Right cardiac atrium (tissue), 5 donors: ENCODE measurements at regions of chr1 and their contacts with region 1.

Region 1: DNA sequence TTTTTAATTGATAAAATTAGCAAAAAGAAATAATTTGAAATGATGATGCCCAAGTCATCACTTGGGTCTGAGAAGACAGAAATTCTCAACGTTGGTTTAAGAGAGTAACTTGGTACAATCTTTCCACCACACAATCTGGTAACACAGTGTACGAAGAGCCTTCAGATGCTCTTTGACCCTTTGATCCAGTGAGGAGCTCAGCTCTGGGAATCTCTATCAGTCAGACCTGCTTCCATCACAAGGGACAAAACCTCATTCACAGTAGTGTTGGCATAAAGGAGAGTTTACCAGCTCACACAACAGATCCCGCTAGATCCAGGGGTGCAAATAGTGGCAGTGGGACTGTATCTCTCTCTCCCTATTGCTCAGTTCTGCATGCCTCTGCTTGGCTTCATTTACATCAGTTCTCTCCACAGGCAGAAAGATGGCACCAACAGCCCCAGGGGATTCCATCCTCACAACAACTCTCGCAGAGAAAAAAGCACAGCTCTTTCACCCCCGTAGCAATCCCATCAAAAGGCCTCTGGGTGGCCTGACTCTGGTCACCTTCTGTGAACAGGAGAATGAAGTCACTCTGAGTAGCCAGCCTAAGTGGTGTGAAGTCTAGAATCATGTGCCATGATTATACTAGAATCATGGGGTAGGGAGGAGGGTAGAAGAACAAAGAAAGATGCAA is 119.7 kb downstream of the ZNF281 start:
- DNase-seq: no peak
- ATAC-seq: no peak
- H3K4me3 ChIP-seq: no peak overlapping the region
- H3K27ac ChIP-seq: no peak overlapping the region
- H3K4me1 ChIP-seq: no peaks in the 10 kb centered on the region
- H3K27me3 ChIP-seq: no peaks in the 10 kb centered on the region

Region 2: GRCh38 chr1:200488375-200489165 is 198.4 kb after region 1 on chr1:
- intact Hi-C with region 1: loop called in 1 of 4 experiments (anchors 10 kb)
- DNase-seq: no peak
- ATAC-seq: peak; percentile 33 to 66
- H3K4me3 ChIP-seq: no peak overlapping the region
- H3K27ac ChIP-seq: no peak overlapping the region
- H3K4me1 ChIP-seq: no peaks in the 10 kb centered on the region
- H3K27me3 ChIP-seq: no peaks in the 10 kb centered on the region

Region 3: GRCh38 chr1:200512191-200512590 is 222.0 kb after region 1 on chr1:
- intact Hi-C with region 1: no loop called
- DNase-seq: no peak
- ATAC-seq: no peak
- H3K4me3 ChIP-seq: no peak overlapping the region
- H3K27ac ChIP-seq: no peak overlapping the region
- H3K4me1 ChIP-seq: no peaks in the 10 kb centered on the region
- H3K27me3 ChIP-seq: no peaks in the 10 kb centered on the region